Activated T-helper 1 cell treated with anti-CD3 and anti-CD28 coated beads, Interleukin-12 subunit alpha, Interleukin-12 subunit beta, Interleukin-2, Interleukin-4 antibody, amounts not matched to agents 30 ng/mL and 10 ng/mL and 1 ng/mL, durations not matched to agents 14 hours and 24 hours and 36 hours (primary cell): ENCODE measurements at regions of chr14 and their contacts with region 1.

Region 1: GRCh38 chr14:71138448-71139293 is 231.4 kb downstream of the PCNX1 start:
- DNase-seq: peak; percentile 34
- H3K4me3 Mint-ChIP-seq: no peak overlapping the region
- H3K27ac Mint-ChIP-seq: peak overlapping the region; percentile 21
- H3K4me1 Mint-ChIP-seq: peaks cover 40% of the 10 kb centered on the region
- H3K27me3 Mint-ChIP-seq: peaks cover 2% of the 10 kb centered on the region

Region 2: DNA sequence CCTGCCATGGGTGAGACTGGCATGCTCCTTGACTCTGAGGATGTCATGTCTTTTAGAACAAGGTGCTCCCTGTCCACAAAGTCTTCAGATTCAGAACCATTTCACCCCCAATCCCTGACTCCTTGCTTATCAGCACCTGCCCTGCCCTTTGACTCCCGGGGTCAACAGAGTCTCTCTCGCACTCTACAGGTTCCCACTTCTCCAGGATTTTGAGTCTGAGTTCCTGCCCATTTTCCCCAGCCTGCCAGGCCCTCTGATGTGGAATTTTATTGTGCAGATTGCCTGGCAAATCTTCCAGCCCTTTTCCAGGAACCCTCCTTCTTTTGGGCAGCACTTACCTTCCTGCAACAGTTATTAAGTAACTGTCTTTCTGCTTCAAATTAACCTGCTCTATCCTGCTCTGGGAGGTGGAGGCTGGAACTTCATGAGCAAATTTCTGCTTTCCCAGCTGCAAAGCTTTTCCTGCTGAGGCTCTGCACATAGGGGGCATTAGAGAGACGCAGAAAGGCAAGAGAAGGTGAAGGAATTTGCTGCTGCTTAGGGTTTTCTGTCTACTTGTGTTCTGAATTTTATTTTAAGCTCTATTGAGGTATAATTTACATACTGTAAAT is 27.6 kb after region 1 on chr14:
- intact Hi-C with region 1: loop called (anchors 2 kb)
- DNase-seq: no peak
- H3K4me3 Mint-ChIP-seq: no peak overlapping the region
- H3K27ac Mint-ChIP-seq: no peak overlapping the region
- H3K4me1 Mint-ChIP-seq: peaks cover 20% of the 10 kb centered on the region
- H3K27me3 Mint-ChIP-seq: peaks cover 10% of the 10 kb centered on the region

Region 3: DNA sequence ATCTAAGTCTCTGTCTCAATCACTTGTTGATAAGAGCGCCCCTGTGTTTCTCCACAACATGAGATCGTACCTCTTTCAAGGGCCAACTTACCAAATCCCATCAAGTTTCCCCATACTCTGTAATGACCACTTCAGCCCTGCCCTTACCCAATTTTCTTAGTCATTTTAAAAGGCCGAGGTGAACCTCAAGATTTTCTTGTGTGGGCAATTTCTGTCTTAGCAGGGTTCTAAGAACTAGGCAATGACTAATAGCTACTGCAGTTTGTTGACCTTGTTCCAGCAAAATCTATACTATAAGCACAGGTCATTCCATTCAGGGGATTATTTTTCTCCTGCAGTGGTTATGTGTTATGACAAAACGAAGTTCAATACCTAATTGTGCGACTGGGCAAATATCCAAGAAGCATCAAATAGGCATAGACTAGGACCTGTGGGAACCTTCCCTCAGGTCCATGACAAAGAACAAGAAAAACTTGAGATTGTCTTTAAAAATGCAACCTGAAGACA is 128.4 kb after region 1 on chr14:
- intact Hi-C with region 1: loop called (anchors 1 kb)
- DNase-seq: no peak
- H3K4me3 Mint-ChIP-seq: peak overlapping the region; percentile 60
- H3K27ac Mint-ChIP-seq: peak overlapping the region; percentile 80
- H3K4me1 Mint-ChIP-seq: peaks cover 52% of the 10 kb centered on the region
- H3K27me3 Mint-ChIP-seq: no peaks in the 10 kb centered on the region

Region 4: DNA sequence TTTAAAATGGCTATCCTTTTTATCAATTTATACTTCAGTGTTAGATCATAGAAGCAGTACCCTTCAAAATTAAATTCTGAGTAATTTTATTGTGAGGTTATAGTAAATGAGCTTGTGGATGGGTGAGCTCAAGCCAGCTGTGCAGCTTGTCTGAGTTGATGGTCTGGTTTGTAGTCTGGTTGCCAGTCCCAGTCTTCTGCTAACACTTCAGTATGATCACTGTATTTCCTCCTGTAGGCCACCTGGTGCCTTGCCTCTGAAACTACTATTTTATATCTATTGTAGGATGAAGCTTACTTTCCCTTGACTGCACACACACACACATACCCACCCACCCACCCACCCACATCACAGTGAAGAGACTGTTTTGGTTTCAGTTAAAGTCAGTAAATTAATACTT is 265.0 kb after region 1 on chr14:
- intact Hi-C with region 1: loop called (anchors 1 kb)
- DNase-seq: peak; percentile 15
- H3K4me3 Mint-ChIP-seq: no peak overlapping the region
- H3K27ac Mint-ChIP-seq: peak overlapping the region; percentile 67
- H3K4me1 Mint-ChIP-seq: peaks cover 56% of the 10 kb centered on the region
- H3K27me3 Mint-ChIP-seq: no peaks in the 10 kb centered on the region

Region 5: GRCh38 chr14:71472043-71472960 is 333.6 kb after region 1 on chr14:
- intact Hi-C with region 1: loop called (anchors 2 kb)
- DNase-seq: no peak
- H3K4me3 Mint-ChIP-seq: peak overlapping the region; percentile 6
- H3K27ac Mint-ChIP-seq: peak overlapping the region; percentile 27
- H3K4me1 Mint-ChIP-seq: peaks cover 67% of the 10 kb centered on the region
- H3K27me3 Mint-ChIP-seq: no peaks in the 10 kb centered on the region

Region 6: GRCh38 chr14:71753126-71753830 is 614.6 kb after region 1 on chr14:
- intact Hi-C with region 1: loop called (anchors 1 kb)
- DNase-seq: peak; percentile 34
- H3K4me3 Mint-ChIP-seq: peak overlapping the region; percentile 19
- H3K27ac Mint-ChIP-seq: no peak overlapping the region
- H3K4me1 Mint-ChIP-seq: peaks cover 18% of the 10 kb centered on the region
- H3K27me3 Mint-ChIP-seq: peaks cover 12% of the 10 kb centered on the region